A673 (cell line): ENCODE measurements at regions of chrX and their contacts with region 1.

Region 1: DNA sequence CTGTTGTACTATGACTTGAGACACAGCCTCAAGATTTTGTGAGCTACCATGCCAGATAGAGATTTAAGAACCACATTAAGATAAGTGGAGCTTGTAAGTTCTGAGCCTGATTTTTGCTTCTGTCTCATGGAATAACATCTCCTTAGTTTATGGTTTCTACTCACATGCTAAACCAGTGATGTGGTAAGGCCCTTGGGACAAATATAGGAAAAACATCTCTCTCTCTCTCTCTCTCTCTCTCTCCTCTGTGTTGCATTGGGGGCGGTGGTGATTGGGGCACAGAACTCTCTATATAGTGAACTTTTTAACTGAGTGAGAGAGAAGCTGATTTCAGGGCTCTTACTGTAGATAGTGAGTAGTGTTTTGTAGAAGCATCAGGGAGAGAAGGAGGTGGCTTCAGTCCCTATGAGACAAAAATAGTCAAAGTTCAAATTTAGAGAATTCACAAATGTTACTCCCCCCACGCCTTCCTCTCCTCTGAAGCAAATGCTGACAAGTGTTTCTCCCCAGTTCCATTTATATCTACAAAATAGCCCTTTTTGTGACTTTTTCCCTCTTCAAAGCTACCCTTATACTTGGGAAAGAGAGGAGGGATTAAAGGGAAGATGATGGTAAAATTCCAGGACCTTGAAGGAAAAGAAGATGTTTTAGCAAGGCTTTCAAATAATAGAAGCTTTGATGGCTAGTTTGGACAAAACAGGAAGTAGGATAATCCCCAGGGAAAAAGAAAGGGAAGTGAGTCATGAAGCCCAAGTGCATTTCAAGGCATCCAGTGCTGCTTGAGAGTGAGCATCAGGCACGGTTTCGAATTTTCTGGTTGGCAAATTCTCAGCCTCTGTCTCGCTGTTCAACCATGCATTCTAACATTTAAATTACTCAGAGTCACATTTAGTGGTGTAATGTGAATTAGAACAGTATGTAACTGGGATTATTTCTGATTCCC is 134.3 kb upstream of the AP1S2 start:
- DNase-seq: peak; percentile 96
- H3K4me3 ChIP-seq: no peak overlapping the region
- H3K27ac ChIP-seq: peak overlapping the region; percentile 86
- H3K4me1 ChIP-seq: peaks cover 23% of the 10 kb centered on the region
- H3K27me3 ChIP-seq: no peaks in the 10 kb centered on the region
- CTCF ChIP-seq: no peak

Region 2: GRCh38 chrX:15781961-15782699 is 206.8 kb before region 1 on chrX:
- CTCF ChIA-PET with region 1: no interaction called
- POLR2A ChIA-PET with region 1: no interaction called
- intact Hi-C with region 1: no loop called
- DNase-seq: no peak
- H3K4me3 ChIP-seq: no peak overlapping the region
- H3K27ac ChIP-seq: no peak overlapping the region
- H3K4me1 ChIP-seq: no peaks in the 10 kb centered on the region
- H3K27me3 ChIP-seq: no peaks in the 10 kb centered on the region
- CTCF ChIP-seq: no peak

Region 3: DNA sequence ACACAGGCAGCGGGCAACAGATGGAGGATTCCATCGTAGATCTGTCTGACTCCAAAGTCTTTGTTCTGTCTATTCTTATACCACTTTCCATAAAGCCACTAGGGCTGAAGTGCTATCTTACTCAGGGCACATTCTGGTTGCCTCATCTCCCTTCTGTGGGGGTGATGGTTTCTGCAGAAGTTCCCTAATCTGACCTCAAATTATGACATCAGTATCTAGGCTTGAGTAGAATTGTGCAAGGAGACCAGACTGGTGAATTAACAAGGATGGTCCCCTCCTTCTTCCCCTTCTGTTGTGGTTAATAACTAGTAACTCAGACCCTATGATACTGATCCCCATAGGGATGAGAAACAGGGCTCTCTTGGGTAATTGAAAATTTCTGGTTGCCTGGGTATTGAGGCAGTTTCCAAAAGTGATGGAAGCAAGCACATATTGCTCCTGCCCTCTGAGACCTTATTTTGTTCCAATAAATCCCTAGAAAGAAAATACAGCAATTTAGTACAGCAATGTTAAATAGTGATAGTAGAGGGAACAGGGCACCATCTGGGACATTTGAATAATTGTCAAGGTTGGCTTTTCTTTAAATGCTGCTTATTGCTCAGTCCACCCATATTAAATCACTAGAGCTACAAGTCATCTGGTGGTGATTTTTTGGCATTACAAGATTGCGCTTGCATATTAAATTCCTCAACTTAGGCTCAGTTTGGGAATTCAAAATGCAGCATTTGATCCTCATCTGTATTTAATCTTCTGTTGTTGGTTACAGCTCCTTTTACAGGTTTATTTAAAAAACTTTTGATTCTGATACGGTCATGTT is 77.0 kb before region 1 on chrX:
- CTCF ChIA-PET with region 1: no interaction called
- POLR2A ChIA-PET with region 1: no interaction called
- intact Hi-C with region 1: no loop called
- DNase-seq: no peak
- H3K4me3 ChIP-seq: no peak overlapping the region
- H3K27ac ChIP-seq: no peak overlapping the region
- H3K4me1 ChIP-seq: peaks cover 4% of the 10 kb centered on the region
- H3K27me3 ChIP-seq: peaks cover 12% of the 10 kb centered on the region
- CTCF ChIP-seq: no peak

Region 4: GRCh38 chrX:16484350-16484749 is 495.4 kb after region 1 on chrX:
- CTCF ChIA-PET with region 1: no interaction called
- POLR2A ChIA-PET with region 1: no interaction called
- intact Hi-C with region 1: no loop called
- DNase-seq: peak; percentile 42
- H3K4me3 ChIP-seq: no peak overlapping the region
- H3K27ac ChIP-seq: no peak overlapping the region
- H3K4me1 ChIP-seq: no peaks in the 10 kb centered on the region
- H3K27me3 ChIP-seq: no peaks in the 10 kb centered on the region
- CTCF ChIP-seq: no peak

Region 5: DNA sequence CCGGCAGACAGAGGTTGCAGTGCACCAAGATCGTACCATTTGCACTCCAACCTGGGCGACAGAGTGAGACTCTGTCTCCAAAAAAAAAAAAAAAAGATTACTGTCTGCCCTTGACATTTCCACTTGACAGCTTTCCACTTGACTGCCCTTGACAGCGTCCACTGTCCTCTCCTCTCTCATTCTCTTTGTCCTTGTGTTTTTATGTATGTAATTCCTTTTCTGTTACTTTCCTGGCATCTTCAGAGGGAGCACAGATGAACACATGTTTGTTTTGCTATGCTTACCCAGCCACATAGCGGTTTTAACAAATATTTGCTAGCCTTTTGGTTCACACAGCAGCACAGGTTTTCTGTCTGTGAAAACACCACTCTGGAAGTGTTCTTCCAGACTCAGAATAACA is 756.7 kb after region 1 on chrX:
- CTCF ChIA-PET with region 1: no interaction called
- POLR2A ChIA-PET with region 1: no interaction called
- intact Hi-C with region 1: loop called (anchors 5 kb)
- DNase-seq: no peak
- H3K4me3 ChIP-seq: no peak overlapping the region
- H3K27ac ChIP-seq: no peak overlapping the region
- H3K4me1 ChIP-seq: no peaks in the 10 kb centered on the region
- H3K27me3 ChIP-seq: no peaks in the 10 kb centered on the region
- CTCF ChIP-seq: no peak